BJ (cell line): ENCODE measurements at regions of chr2 and their contacts with region 1.

Region 1: DNA sequence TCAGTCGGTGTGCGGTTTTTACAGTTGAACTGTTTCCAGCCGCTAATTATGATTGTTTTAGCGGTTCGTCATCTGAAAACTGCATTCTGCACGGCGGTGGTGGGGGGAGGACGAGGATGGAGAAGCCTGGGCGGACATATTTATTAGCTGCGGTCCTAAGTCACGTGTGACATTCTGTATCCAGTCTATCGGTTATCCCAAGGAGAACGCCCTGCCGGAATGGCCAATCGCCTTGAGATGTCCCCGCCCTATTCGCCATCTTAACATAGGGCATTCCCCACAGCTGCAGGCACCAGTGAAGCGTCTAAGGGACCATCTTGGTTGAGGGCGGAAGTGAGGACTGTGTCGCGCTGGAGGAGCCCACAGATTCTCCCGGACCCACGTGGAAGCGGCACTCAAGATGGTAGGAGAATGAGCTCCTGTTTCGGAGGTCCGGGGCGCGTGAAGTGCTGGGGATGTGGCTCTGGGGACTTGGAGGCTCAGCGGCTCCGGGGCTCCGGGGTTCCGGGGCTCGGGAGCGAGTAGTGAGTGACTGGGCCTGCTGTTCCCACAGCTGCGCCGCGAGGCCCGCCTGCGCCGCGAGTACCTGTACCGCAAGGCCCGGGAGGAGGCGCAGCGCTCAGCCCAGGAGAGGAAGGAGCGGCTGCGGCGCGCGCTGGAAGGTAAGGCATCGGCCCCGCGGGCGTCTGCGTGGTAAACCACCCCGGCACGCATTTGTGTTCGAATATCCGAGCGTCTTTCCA is at the start of gene IMP4:
- DNase-seq: peak; percentile 99
- H3K4me3 ChIP-seq: peak within 1 kb of the TSS; percentile 57
- H3K27me3 ChIP-seq: no peaks in the 10 kb centered on the region
- CTCF ChIP-seq: peak; percentile 55
- polyA plus RNA-seq, gene IMP4: 80.9 and 144 TPM in 2 replicates

Region 2: DNA sequence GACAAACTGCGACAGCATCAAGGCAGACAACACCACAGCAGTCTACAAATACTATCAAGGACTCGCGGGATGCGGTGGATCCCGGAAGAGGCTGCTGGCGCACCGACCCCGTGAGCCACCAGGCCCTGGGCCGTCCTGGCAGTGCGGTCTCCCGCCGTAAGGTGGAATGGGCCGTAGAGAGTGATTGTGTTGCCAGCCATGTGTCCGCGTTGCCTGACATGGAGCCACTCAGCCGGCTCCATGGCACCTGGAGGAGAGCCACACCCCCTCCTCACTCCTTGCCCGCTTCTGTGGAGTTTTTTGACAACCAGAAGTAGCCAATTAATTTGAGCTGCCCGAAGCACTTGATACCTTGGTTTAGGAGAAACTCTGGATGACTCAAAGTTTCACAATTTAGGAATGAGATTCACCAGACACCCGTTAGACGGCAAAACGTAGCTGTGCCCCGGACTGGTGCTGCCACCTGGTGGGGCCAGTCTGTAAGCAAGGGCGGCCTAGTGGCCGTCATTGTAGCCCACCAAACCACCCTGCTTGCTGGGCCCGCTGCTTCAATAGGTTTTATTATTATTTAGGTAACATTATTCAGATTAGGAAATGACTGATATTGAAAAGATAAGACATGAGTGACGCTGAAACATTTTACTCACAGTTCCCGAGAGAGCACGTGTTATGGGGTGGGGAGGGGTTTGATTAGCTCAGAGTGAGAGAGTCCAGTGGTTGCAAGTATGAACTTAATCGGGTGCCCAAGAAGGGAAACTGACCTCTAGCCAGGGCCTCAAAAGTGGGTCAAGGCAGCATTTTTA is 10.2 kb before region 1 on chr2:
- CTCF ChIA-PET with region 1: interaction called, 33 read pairs
- POLR2A ChIA-PET with region 1: no interaction called
- DNase-seq: no peak
- H3K4me3 ChIP-seq: no peak overlapping the region; the same call in 1 of the 2 replicates
- H3K27me3 ChIP-seq: peaks cover 2% of the 10 kb centered on the region
- CTCF ChIP-seq: peak; percentile 98

Region 3: DNA sequence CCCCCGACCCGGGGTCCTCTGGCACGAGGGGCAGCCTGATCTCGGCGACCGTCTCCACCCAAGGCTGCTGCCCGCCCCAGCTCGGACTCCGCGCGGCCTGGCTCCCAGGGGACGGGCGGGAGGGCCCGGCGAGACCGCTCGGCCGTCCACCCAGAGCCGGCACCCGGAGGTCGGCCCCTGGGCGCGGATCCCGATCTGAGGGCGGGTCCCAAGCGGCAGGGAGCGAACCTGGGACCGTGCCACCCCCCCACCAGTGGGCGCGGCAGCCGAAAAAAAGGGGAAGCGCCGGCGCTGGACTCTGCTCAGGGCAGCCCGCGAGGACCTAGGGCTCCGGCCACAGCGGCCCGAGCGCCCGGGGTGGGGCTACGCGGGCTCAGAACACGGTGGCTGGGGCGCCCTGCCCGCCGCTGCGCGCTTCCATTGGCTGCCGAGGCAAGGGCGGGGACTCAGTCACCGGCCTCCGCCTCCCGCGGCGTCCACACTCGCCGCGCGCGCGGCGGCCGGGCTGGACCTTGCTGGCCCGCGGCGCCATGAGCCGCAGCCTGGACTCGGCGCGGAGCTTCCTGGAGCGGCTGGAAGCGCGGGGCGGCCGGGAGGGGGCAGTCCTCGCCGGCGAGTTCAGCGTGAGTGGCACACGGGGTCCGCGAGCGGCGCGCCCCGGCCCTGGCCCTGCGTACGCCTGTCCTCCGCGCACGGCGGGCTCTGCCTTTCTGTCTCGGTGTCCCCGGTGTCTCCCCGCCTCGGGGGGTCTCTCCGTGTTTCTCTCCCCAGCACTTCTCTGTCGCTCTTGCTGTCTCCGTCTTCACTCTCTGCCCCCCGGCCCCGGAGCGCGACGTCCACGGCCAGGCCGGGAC is 13.1 kb after region 1 on chr2 and contains the start of gene PTPN18:
- CTCF ChIA-PET with region 1: interaction called, 16 read pairs
- POLR2A ChIA-PET with region 1: interaction called, 13 read pairs
- DNase-seq: peak; percentile 56
- H3K4me3 ChIP-seq: peak within 1 kb of the TSS; percentile 83
- H3K27me3 ChIP-seq: no peaks in the 10 kb centered on the region
- CTCF ChIP-seq: peak; percentile 35
- polyA plus RNA-seq, gene PTPN18: 21.0 and 24.4 TPM in 2 replicates